ENCODE measurements at regions of chr12 and their contacts with region 1.

Region 1: GRCh38 chr12:25052196-25052913 is 103.5 kb upstream of the BCAT1 start:
- DNase-seq: peak; percentile 93
- ATAC-seq: peak; percentile 87
- H3K4me3 ChIP-seq: peak overlapping the region; percentile 64 to 99 (median 86)
- H3K4me3 Mint-ChIP-seq: peak overlapping the region; percentile 100
- H3K27ac ChIP-seq: peak overlapping the region; percentile 85 to 86
- H3K27ac Mint-ChIP-seq: peak overlapping the region; percentile 98
- H3K4me1 ChIP-seq: peaks cover 28% of the 10 kb centered on the region in 2 donors
- H3K4me1 Mint-ChIP-seq: peaks cover 48% of the 10 kb centered on the region
- H3K27me3 ChIP-seq: no peaks in the 10 kb centered on the region
- H3K27me3 Mint-ChIP-seq: no peaks in the 10 kb centered on the region
- CTCF ChIP-seq: no peak

Region 2: GRCh38 chr12:24814379-24815113 is 237.8 kb before region 1 on chr12:
- CTCF ChIA-PET with region 1: no interaction called
- POLR2A ChIA-PET with region 1: no interaction called
- intact Hi-C with region 1: loop called (anchors 10 kb)
- DNase-seq: peak; percentile 75
- ATAC-seq: peak; percentile 86
- H3K4me3 ChIP-seq: peak overlapping the region; percentile 33 to 70 (median 51)
- H3K4me3 Mint-ChIP-seq: peak overlapping the region; percentile 84
- H3K27ac ChIP-seq: peak overlapping the region; percentile 48 to 67
- H3K27ac Mint-ChIP-seq: peak overlapping the region; percentile 85
- H3K4me1 ChIP-seq: peaks cover 5 to 16% of the 10 kb centered on the region in 2 donors
- H3K4me1 Mint-ChIP-seq: peaks cover 32% of the 10 kb centered on the region
- H3K27me3 ChIP-seq: no peaks in the 10 kb centered on the region
- H3K27me3 Mint-ChIP-seq: no peaks in the 10 kb centered on the region
- CTCF ChIP-seq: no peak

Region 3: DNA sequence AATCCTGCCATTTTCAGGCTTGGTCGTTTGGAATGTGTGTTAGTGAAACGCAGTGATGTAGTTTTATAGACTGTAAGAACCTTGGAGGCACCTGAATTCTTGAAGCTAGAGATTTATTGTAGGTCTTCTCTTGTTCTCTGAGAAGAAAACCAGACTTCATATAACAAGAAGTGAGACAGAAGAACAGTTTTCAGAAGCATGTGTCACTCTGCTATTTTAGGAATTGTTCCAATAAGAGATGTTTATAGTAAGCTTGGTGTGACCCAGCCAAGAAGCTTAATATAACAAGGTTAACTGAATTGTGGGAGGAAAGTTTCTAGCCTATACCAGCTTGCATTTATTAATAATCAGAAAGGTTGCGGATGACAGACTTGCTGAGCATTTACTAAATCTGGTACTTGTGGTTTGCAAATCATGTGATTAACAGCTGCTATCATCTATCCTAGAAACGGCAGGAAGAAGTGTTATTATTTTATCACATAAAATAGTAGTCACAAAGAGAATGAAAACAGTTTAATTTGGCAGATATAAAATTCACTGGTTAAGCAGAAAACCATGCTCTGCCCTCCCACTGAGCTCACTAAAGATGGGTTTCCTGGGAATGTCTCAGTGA is 54.3 kb before region 1 on chr12:
- CTCF ChIA-PET with region 1: interaction called, 53 read pairs
- POLR2A ChIA-PET with region 1: interaction called, 22 read pairs
- intact Hi-C with region 1: loop called (anchors 1 kb)
- DNase-seq: peak; percentile 77
- ATAC-seq: peak; percentile 79
- H3K4me3 ChIP-seq: peak overlapping the region in 2 of 5 experiments; percentile 1 to 59
- H3K4me3 Mint-ChIP-seq: peak overlapping the region; percentile 64
- H3K27ac ChIP-seq: peak overlapping the region; percentile 79 to 84
- H3K27ac Mint-ChIP-seq: peak overlapping the region; percentile 85
- H3K4me1 ChIP-seq: peaks cover 74 to 76% of the 10 kb centered on the region in 2 donors
- H3K4me1 Mint-ChIP-seq: peaks cover 81% of the 10 kb centered on the region
- H3K27me3 ChIP-seq: no peaks in the 10 kb centered on the region
- H3K27me3 Mint-ChIP-seq: no peaks in the 10 kb centered on the region
- CTCF ChIP-seq: no peak

Region 4: GRCh38 chr12:25074954-25075353 is 22.6 kb after region 1 on chr12:
- CTCF ChIA-PET with region 1: interaction called, 8 read pairs
- POLR2A ChIA-PET with region 1: interaction called, 7 read pairs
- intact Hi-C with region 1: loop called (anchors 2 kb)
- DNase-seq: no peak
- ATAC-seq: peak; percentile 43
- H3K4me3 ChIP-seq: no peak overlapping the region
- H3K4me3 Mint-ChIP-seq: peak overlapping the region; percentile 29
- H3K27ac ChIP-seq: peak overlapping the region in 1 of 2 donors; percentile 54
- H3K27ac Mint-ChIP-seq: peak overlapping the region; percentile 62
- H3K4me1 ChIP-seq: peaks cover 43 to 44% of the 10 kb centered on the region in 2 donors
- H3K4me1 Mint-ChIP-seq: peaks cover 64% of the 10 kb centered on the region
- H3K27me3 ChIP-seq: no peaks in the 10 kb centered on the region
- H3K27me3 Mint-ChIP-seq: no peaks in the 10 kb centered on the region
- CTCF ChIP-seq: no peak

Region 5: DNA sequence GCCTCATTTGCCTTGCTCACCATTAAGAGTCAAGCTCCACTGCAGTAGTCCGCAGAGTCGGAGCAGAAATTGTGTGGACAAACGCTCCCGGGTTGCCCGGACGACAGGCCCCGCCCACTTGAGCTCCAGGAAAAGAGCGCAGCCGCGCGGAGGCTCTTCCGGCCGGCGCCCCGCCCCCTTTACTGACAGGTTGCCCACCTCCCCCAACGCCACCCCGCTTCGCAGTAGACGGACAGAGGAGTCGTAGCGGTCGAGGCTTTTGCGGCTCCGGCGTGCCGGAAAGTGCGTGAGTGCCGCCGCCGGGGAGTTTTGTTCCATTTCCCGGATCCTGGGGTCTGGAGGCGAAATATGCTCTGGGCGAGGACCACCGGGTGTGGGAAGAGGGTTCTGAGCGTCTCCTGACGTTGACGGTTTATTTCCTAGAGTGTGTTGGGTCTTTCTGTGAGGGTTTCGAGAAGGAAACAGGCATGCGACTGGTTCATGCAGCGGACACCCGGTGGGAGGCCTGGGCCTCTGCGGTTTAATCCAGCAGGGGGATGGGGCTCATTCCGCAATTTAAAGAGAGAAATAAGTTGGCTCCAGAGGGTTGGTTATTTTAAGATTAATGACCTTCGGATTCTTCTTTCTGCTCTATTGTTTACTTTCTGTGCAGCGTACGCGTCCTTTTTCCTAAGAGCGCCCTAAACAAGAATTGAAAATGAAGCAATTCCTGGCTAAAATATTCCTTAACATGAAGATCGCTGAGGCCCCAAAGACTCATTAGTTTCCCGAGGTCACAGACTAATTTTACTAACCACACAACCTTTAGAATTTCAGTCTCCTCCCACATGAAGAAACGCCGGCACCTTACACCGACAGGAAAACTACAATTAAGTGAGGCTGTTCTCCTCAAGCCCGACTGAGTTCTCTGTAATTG is 143.0 kb after region 1 on chr12 and contains the starts of genes DNAI7 and ETFRF1:
- CTCF ChIA-PET with region 1: interaction called, 5 read pairs
- POLR2A ChIA-PET with region 1: interaction called, 3 read pairs
- intact Hi-C with region 1: loop called (anchors 1 kb)
- DNase-seq: peak; percentile 98
- ATAC-seq: peak; percentile 97
- H3K4me3 ChIP-seq: peak within 1 kb of the TSS; percentile 83 to 94 (median 93)
- H3K4me3 Mint-ChIP-seq: peak within 1 kb of the TSS; percentile 98
- H3K27ac ChIP-seq: peak within 1 kb of the TSS; percentile 92 to 95
- H3K27ac Mint-ChIP-seq: peak within 1 kb of the TSS; percentile 97
- H3K4me1 ChIP-seq: peaks cover 14 to 18% of the 10 kb centered on the region in 2 donors
- H3K4me1 Mint-ChIP-seq: peaks cover 40% of the 10 kb centered on the region
- H3K27me3 ChIP-seq: no peaks in the 10 kb centered on the region
- H3K27me3 Mint-ChIP-seq: no peaks in the 10 kb centered on the region
- CTCF ChIP-seq: no peak
- total RNA-seq, gene DNAI7: 0.39 and 0.62 TPM in 2 replicates
- total RNA-seq, gene ETFRF1: 26.1 and 26.9 TPM in 2 replicates

Region 6: GRCh38 chr12:26113853-26114719 is 1061.7 kb after region 1 on chr12:
- CTCF ChIA-PET with region 1: no interaction called
- POLR2A ChIA-PET with region 1: no interaction called
- intact Hi-C with region 1: loop called (anchors 10 kb)
- DNase-seq: peak; percentile 94
- ATAC-seq: peak; percentile 80
- H3K4me3 ChIP-seq: peak overlapping the region in 4 of 5 experiments; percentile 67 to 80 (median 70)
- H3K4me3 Mint-ChIP-seq: peak overlapping the region; percentile 87
- H3K27ac ChIP-seq: peak overlapping the region; percentile 91 to 95
- H3K27ac Mint-ChIP-seq: peak overlapping the region; percentile 75
- H3K4me1 ChIP-seq: peaks cover 36 to 47% of the 10 kb centered on the region in 2 donors
- H3K4me1 Mint-ChIP-seq: peaks cover 49% of the 10 kb centered on the region
- H3K27me3 ChIP-seq: no peaks in the 10 kb centered on the region
- H3K27me3 Mint-ChIP-seq: no peaks in the 10 kb centered on the region
- CTCF ChIP-seq: peak; percentile 48